ENCODE measurements at regions of chr5 and their contacts with region 1.

Region 1: DNA sequence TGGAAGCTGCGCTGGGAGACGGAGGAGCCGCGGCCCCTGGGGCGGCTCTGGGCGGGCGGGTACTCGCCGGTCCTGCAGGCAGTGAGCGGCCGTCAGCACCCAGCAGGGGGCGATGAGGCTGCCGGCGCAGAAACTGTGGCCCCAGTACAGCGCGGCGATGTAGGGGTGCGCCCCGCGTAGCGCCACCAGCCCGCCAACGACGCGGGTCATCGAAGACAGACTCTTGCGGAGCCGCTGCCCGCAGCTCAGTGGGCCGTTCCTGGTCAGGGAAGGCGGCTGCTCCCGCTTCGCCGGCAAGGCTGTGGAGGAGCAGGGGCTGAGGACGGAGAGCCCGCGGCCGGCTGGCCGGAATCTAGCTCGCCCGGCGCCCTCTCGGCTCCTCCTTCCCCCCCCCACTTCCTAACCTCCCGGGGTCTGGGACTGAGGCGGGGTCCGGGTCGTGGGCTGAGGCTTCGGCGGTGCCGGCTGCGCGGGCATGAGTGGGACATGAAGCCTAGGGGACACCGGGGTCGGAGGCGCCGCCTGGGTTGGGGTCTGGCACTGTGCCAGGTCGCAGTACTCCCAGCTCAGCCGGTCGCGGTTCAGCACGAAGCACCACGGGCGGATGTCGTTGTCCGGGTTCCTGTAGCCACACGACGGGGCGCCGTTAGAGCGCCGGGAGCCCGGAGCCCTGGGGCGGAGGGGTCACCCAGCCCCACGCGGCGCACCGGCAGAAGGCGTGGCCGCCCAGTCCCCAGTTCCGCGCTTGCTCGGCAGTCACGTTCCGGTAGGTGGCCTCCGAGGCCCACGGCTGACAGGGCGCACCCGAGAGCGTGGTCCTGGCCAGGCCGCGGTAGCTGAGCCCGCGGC is 3.6 kb upstream of the PFN3 start:
- DNase-seq: no peak
- H3K4me3 ChIP-seq: peak overlapping the region; percentile 51 to 64
- H3K27ac ChIP-seq: peak overlapping the region; percentile 60
- H3K4me1 ChIP-seq: peaks cover 43% of the 10 kb centered on the region
- H3K27me3 ChIP-seq: peaks cover 17% of the 10 kb centered on the region
- CTCF ChIP-seq: peak; percentile 32 to 81 (median 44)
- POLR2A ChIP-seq: no peak

Region 2: GRCh38 chr5:177447606-177448243 is 43.7 kb after region 1 on chr5:
- intact Hi-C with region 1: loop called (anchors 2 kb)
- DNase-seq: no peak
- H3K4me3 ChIP-seq: peak overlapping the region; percentile 50 to 70
- H3K27ac ChIP-seq: peak overlapping the region; percentile 19
- H3K4me1 ChIP-seq: peaks cover 36% of the 10 kb centered on the region
- H3K27me3 ChIP-seq: no peaks in the 10 kb centered on the region
- CTCF ChIP-seq: no peak
- POLR2A ChIP-seq: no peak

Region 3: GRCh38 chr5:178372142-178372571 is 968.1 kb after region 1 on chr5:
- intact Hi-C with region 1: no loop called
- DNase-seq: no peak
- H3K4me3 ChIP-seq: peak overlapping the region in 1 of 2 donors; percentile 13
- H3K27ac ChIP-seq: peak overlapping the region; percentile 76
- H3K4me1 ChIP-seq: peaks cover 15% of the 10 kb centered on the region
- H3K27me3 ChIP-seq: no peaks in the 10 kb centered on the region
- CTCF ChIP-seq: no peak
- POLR2A ChIP-seq: no peak